Gastrocnemius medialis (tissue), 4 donors: ENCODE measurements at regions of chr2 and their contacts with region 1.

Region 1: DNA sequence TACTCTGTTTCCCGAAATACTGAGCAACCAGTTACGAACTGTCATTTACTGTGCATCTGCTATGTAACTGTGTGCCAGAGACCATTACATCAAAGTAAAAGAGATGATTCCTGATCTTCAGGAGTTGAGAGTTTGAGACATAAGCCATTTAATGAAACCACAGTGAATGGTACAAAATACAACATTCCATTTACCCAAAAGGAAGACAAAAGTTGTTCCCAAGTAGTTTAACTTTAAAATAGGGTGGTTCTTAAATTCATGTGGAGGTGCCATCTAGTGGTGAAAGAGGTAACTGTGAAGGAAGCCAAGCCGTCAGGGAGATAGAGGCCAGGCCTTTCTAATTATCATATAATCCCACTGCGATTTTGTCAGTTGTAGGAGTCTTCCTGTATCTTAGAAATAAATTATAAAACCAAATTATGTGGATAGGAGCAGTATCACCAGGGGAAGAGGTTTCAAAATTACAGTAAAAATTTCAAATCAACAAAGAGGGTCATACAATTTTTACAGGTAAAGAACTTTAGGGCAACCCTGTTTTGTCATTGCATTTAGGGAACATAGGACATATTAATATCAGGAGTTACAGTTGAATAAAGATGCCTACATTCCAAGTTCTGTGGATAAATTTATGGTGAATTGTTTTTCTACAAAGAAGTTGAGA is 67.7 kb downstream of the EPAS1 start:
- DNase-seq: no peak
- ATAC-seq: peak; percentile 44 to 71
- H3K4me3 ChIP-seq: no peak overlapping the region
- H3K27ac ChIP-seq: peak overlapping the region in 2 of 4 donors; percentile 12 to 19
- H3K4me1 ChIP-seq: peaks cover 7 to 10% of the 10 kb centered on the region in 2 donors
- H3K27me3 ChIP-seq: no peaks in the 10 kb centered on the region
- CTCF ChIP-seq: peak; percentile 71 to 84 (median 78)
- POLR2A ChIP-seq: no peak

Region 2: GRCh38 chr2:46010925-46011490 is 353.9 kb before region 1 on chr2:
- in situ Hi-C with region 1: loop called in 1 of 4 experiments (anchors 10 kb)
- intact Hi-C with region 1: loop called (anchors 2 kb)
- DNase-seq: no peak
- ATAC-seq: no peak
- H3K4me3 ChIP-seq: no peak overlapping the region
- H3K27ac ChIP-seq: no peak overlapping the region
- H3K4me1 ChIP-seq: peaks cover 0 to 4% of the 10 kb centered on the region in 2 donors
- H3K27me3 ChIP-seq: no peaks in the 10 kb centered on the region
- CTCF ChIP-seq: peak; percentile 24 to 60 (median 47)
- POLR2A ChIP-seq: no peak

Region 3: GRCh38 chr2:46171411-46171953 is 193.4 kb before region 1 on chr2:
- in situ Hi-C with region 1: no loop called
- intact Hi-C with region 1: no loop called
- DNase-seq: no peak
- ATAC-seq: no peak
- H3K4me3 ChIP-seq: no peak overlapping the region
- H3K27ac ChIP-seq: no peak overlapping the region
- H3K4me1 ChIP-seq: no peaks in the 10 kb centered on the region
- H3K27me3 ChIP-seq: no peaks in the 10 kb centered on the region
- CTCF ChIP-seq: no peak
- POLR2A ChIP-seq: no peak

Region 4: GRCh38 chr2:46230115-46230571 is 134.8 kb before region 1 on chr2:
- in situ Hi-C with region 1: loop called in 1 of 4 experiments (anchors 25 kb)
- intact Hi-C with region 1: loop called (anchors 1 kb)
- DNase-seq: peak; percentile 16 to 53
- ATAC-seq: peak; percentile 74 to 87
- H3K4me3 ChIP-seq: no peak overlapping the region
- H3K27ac ChIP-seq: peak overlapping the region in 1 of 4 donors; percentile 27
- H3K4me1 ChIP-seq: peaks cover 9 to 14% of the 10 kb centered on the region in 2 donors
- H3K27me3 ChIP-seq: no peaks in the 10 kb centered on the region
- CTCF ChIP-seq: peak in 3 of 5 experiments; percentile 42 to 58 (median 52)
- POLR2A ChIP-seq: no peak